ENCODE measurements at regions of chr2 and their contacts with region 1.

Region 1: GRCh38 chr2:166197446-166197845 is 69.6 kb upstream of the SCN1A start:
- DNase-seq: no peak
- H3K4me3 ChIP-seq: no peak overlapping the region
- H3K27ac ChIP-seq: no peak overlapping the region
- H3K4me1 ChIP-seq: no peaks in the 10 kb centered on the region
- H3K27me3 ChIP-seq: no peaks in the 10 kb centered on the region
- CTCF ChIP-seq: no peak

Region 2: GRCh38 chr2:164485541-164485940 is 1711.9 kb before region 1 on chr2:
- intact Hi-C with region 1: loop called (anchors 5 kb)
- DNase-seq: no peak
- H3K4me3 ChIP-seq: no peak overlapping the region
- H3K27ac ChIP-seq: no peak overlapping the region
- H3K4me1 ChIP-seq: no peaks in the 10 kb centered on the region
- H3K27me3 ChIP-seq: no peaks in the 10 kb centered on the region
- CTCF ChIP-seq: no peak